ENCODE measurements at regions of chr17 and their contacts with region 1.

Region 1: DNA sequence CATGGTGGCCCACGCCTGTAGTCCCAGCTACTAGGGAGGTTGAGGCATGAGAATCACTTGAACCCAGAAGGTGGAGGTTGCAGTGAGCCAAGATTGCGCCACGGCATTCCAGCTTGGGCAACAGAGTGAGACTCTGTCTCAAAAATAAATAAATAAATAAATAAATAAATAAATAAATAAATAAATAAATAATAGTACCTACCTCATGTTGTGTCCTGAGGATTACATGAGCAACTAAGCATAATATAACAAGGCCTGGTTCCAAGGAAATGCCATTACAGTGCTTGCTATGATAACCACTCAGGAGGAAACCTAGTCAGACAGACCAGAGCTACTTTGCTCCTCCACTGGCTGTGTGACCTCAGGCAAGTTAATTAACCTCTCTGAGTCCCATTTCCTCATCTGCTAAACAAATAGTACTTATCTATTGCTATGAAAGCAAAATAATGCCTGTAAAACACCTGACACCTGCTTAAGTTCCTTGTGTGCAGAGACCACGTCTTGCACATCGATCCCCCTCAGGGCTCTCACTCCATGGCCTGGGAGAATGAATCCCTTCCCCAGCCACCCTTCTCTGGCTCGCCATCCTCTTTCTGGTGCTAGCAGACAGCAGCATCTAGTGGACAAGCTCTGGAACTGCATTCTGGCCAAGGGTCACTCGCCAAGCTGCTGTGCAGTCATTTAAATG is 7.5 kb downstream of the EPOP start:
- DNase-seq: peak; percentile 57
- ATAC-seq: peak; percentile 65
- H3K4me3 ChIP-seq: no peak overlapping the region
- H3K27ac ChIP-seq: no peak overlapping the region
- H3K4me1 ChIP-seq: peaks cover 6 to 20% of the 10 kb centered on the region in 2 experiments; a peak in 3 of 4 replicates
- H3K27me3 ChIP-seq: no peaks in the 10 kb centered on the region; the same call in 1 of the 2 replicates
- CTCF ChIP-seq: peak; percentile 98 to 100 (median 100)
- POLR2A ChIP-seq: no peak
- RAD21 ChIP-seq: peak; percentile 99

Region 2: GRCh38 chr17:38421871-38422827 is 245.1 kb before region 1 on chr17:
- CTCF ChIA-PET with region 1: interaction called, 11 read pairs
- POLR2A ChIA-PET with region 1: no interaction called
- RAD21 ChIA-PET with region 1: interaction called in 1 of 2 experiments, 4 read pairs
- intact Hi-C with region 1: loop called (anchors 1 kb)
- DNase-seq: no peak
- ATAC-seq: no peak
- H3K4me3 ChIP-seq: no peak overlapping the region
- H3K27ac ChIP-seq: no peak overlapping the region
- H3K4me1 ChIP-seq: peaks cover 5 to 17% of the 10 kb centered on the region in 2 experiments; a peak in 3 of 4 replicates
- H3K27me3 ChIP-seq: no peaks in the 10 kb centered on the region
- CTCF ChIP-seq: no peak
- POLR2A ChIP-seq: no peak
- RAD21 ChIP-seq: no peak

Region 3: DNA sequence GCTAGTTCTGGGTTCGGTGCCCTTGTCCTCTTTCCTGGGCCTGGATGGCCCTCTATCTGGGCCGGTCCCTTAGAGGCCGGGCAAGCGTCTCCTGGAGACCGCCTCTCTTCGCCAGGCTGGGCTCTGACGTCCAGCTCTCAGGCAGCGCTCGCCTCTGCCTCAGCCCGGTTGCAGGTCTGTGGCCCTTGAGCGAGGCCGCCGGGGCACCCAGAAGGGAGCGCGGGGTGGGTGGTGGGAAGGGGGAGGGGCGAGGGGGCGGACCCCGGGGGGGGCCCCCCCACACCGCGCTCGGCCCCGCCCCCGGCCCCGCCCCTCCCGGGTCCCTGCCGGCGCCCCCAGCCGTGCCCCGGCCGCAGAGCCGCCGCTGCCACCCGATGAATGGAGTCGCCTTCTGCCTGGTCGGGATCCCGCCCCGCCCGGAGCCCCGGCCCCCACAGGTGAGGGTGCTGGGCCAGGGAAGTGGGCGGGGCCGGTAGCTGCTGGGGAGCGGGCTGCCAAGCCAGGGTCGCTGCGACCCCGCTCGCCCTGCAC is 239.1 kb before region 1 on chr17 and contains the start of gene ARHGAP23:
- CTCF ChIA-PET with region 1: interaction called, 11 read pairs
- POLR2A ChIA-PET with region 1: no interaction called
- RAD21 ChIA-PET with region 1: interaction called in 1 of 2 experiments, 4 read pairs
- intact Hi-C with region 1: loop called (anchors 1 kb)
- DNase-seq: no peak
- ATAC-seq: peak; percentile 66
- H3K4me3 ChIP-seq: peak within 1 kb of the TSS; percentile 64 to 81
- H3K27ac ChIP-seq: peak within 1 kb of the TSS; percentile 62
- H3K4me1 ChIP-seq: peaks cover 22 to 44% of the 10 kb centered on the region in 2 experiments
- H3K27me3 ChIP-seq: no peaks in the 10 kb centered on the region
- CTCF ChIP-seq: no peak
- POLR2A ChIP-seq: no peak
- RAD21 ChIP-seq: no peak
- total RNA-seq, gene ARHGAP23: 41.0 TPM

Region 4: DNA sequence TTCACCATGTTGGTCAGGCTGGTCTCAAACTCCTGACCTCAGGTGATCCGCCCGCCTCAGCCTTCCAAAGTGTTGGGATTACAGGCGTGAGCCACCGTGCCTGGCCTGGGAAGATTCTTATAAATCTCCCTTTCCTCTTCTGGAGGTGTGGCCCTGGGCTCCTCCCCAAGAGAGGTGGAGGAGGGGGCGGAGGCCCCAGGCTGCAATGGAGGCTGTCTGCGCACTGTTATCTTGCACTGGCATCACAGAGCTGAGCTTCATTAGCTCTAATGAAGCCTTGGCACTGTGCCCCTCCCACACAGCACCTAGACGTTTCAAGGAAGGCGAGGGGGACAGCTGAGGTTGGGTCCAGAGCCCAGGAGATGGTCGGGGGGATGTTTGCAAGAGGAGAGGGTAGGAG is 231.4 kb before region 1 on chr17:
- CTCF ChIA-PET with region 1: no interaction called
- POLR2A ChIA-PET with region 1: no interaction called
- RAD21 ChIA-PET with region 1: no interaction called
- intact Hi-C with region 1: loop called (anchors 5 kb)
- DNase-seq: no peak
- ATAC-seq: peak; percentile 44; the same call in 1 of the 2 replicates
- H3K4me3 ChIP-seq: no peak overlapping the region
- H3K27ac ChIP-seq: no peak overlapping the region
- H3K4me1 ChIP-seq: no peaks in the 10 kb centered on the region
- H3K27me3 ChIP-seq: no peaks in the 10 kb centered on the region
- CTCF ChIP-seq: no peak
- POLR2A ChIP-seq: no peak
- RAD21 ChIP-seq: no peak

Region 5: DNA sequence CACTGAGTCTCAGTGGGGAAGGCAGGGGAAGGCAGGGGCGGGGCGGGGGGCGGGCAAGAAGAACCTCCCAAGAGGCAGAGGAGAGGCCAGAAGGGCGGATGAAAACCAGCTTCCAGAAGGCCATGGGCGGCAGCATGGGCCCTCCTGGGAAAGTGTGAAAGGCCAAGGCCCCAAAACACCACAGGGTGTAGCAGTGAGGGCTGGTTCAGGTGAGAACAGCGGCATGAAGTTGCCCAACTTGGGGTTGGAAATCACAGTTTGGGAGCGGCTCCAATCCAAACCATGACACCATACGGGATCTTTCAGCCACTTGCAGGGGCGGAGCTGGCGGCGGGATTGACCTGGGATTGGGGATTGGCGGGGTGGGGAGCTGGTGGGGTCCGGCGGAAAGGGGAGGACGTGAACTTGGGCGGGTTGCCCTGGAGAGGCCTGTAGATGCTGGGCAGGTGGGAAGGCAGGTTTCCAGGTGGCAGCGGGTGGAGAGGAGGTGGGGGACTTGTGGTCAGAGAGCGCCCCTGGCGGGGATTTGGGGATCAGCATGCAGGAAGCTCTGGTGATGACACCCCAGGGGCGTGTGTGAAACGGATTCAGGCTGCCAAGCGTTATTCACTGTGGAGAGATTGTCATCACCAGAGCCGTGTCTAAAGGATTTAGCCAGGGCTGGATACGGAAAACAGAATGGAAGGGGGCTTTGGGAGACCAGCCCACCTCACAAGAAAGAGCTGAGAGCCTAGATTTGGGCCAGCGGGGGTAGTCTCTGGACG is 158.1 kb before region 1 on chr17:
- CTCF ChIA-PET with region 1: interaction called, 7 read pairs
- POLR2A ChIA-PET with region 1: no interaction called
- RAD21 ChIA-PET with region 1: no interaction called
- intact Hi-C with region 1: loop called (anchors 5 kb)
- DNase-seq: peak; percentile 65
- ATAC-seq: peak; percentile 89
- H3K4me3 ChIP-seq: no peak overlapping the region
- H3K27ac ChIP-seq: no peak overlapping the region
- H3K4me1 ChIP-seq: peaks cover 0 to 22% of the 10 kb centered on the region in 2 experiments; a peak in 2 of 4 replicates
- H3K27me3 ChIP-seq: no peaks in the 10 kb centered on the region
- CTCF ChIP-seq: peak; percentile 53 to 91 (median 81); a peak in 5 of 6 replicates
- POLR2A ChIP-seq: no peak
- RAD21 ChIP-seq: peak; percentile 52

Region 6: DNA sequence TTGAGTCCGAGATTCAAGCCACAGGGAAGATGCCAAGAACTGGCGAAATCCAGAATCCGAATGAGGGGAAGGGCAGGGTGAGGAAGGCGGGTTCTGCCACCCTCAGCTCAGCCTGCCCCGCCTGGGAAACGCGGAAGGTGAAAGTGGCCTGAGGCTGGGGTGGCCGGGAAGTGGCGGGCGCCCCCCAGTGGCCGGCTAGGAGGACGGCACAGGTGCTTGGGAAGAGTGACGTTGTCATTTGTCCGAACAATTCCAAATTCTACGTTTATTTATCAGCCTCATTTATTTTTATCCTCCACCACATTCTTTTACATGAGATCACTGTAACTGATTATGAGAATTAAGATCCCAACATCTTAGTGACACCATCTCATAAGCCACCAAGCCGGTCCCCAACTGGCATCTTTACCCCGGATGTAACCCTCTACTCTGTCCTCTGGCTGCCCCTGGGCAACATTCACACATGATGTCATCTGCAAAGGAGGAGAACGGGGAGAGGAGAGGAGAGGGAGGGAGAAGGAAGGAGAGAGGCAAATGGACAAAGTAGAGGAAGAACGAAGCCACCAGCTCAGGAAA is 82.8 kb before region 1 on chr17:
- CTCF ChIA-PET with region 1: interaction called, 9 read pairs
- POLR2A ChIA-PET with region 1: interaction called, 3 read pairs
- RAD21 ChIA-PET with region 1: interaction called in 1 of 2 experiments, 4 read pairs
- intact Hi-C with region 1: loop called (anchors 10 kb)
- DNase-seq: no peak
- ATAC-seq: peak; percentile 92
- H3K4me3 ChIP-seq: no peak overlapping the region
- H3K27ac ChIP-seq: 0 out of 2 replicates have a peak overlapping the region, but pooled peaks have one; percentile 19
- H3K4me1 ChIP-seq: peaks cover 22 to 33% of the 10 kb centered on the region in 2 experiments
- H3K27me3 ChIP-seq: no peaks in the 10 kb centered on the region
- CTCF ChIP-seq: peak; percentile 96 to 97 (median 96)
- POLR2A ChIP-seq: no peak
- RAD21 ChIP-seq: peak; percentile 95

Region 7: DNA sequence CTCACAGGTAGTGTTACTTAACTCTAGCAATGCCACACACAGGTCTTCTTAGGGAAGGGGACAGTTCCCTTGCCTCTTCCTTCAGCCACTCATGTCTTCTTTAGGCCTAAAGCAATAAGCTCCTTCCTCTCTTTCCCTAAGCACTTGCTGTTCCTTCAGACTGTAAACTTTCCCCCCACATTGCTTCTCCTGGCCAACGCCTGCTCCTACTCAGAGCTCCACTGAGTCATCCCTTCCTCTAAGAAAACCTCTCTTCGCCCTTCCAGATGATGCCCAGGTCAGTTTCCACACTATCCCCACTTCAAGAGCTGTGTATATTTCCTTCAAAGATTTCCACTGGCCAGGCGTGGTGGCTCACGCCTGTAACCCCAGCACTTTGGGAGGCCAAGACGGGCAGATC is 20.0 kb after region 1 on chr17:
- CTCF ChIA-PET with region 1: no interaction called
- POLR2A ChIA-PET with region 1: no interaction called
- RAD21 ChIA-PET with region 1: no interaction called
- intact Hi-C with region 1: no loop called
- DNase-seq: no peak
- ATAC-seq: no peak
- H3K4me3 ChIP-seq: no peak overlapping the region
- H3K27ac ChIP-seq: no peak overlapping the region
- H3K4me1 ChIP-seq: peaks cover 0 to 4% of the 10 kb centered on the region in 2 experiments; a peak in 1 of 4 replicates
- H3K27me3 ChIP-seq: no peaks in the 10 kb centered on the region
- CTCF ChIP-seq: no peak
- POLR2A ChIP-seq: no peak
- RAD21 ChIP-seq: no peak

Region 8: GRCh38 chr17:38711792-38712571 is 44.7 kb after region 1 on chr17:
- CTCF ChIA-PET with region 1: no interaction called
- POLR2A ChIA-PET with region 1: no interaction called
- RAD21 ChIA-PET with region 1: no interaction called
- intact Hi-C with region 1: no loop called
- DNase-seq: no peak
- ATAC-seq: no peak
- H3K4me3 ChIP-seq: no peak overlapping the region
- H3K27ac ChIP-seq: no peak overlapping the region
- H3K4me1 ChIP-seq: peaks cover 2 to 10% of the 10 kb centered on the region in 2 experiments; a peak in 3 of 4 replicates
- H3K27me3 ChIP-seq: no peaks in the 10 kb centered on the region
- CTCF ChIP-seq: no peak
- POLR2A ChIP-seq: no peak
- RAD21 ChIP-seq: no peak

Measured in HCT116 (cell line).